Head of caudate nucleus (tissue), 42 donors: ENCODE measurements at regions of chr15 and their contacts with region 1.

Region 1: DNA sequence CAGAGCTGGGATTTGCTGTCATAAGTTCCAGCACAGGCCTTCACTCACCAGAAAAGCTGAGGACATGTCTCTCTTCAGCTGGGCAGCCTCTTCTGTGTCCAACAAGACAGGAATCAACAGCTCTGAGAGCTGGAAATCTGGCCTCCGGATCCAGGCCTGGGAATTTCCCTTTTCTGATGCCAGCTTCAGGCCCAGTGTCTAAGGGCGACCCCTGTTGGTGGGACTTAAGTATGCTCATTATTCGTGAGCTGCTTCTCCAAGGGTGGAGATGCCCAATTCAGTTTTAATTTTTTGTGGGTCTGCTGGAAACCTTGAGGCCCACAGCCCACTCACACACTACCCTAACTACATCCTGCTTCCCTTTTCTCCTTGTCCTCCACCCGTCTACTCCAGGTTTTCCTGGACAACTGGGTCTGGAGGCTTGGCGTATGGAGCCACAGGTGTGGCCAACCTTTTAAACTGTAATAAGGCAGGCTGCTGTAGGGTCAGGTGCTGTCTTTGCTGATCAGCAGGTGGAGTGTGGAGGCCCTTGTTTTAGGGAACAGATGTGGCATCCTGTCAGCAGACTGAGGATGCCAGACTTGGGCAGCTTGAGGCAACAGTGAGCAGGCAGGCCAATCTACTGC is 2.6 kb upstream of the CEMIP start:
- DNase-seq: peak; percentile 27 to 91 (median 78)

Region 2: GRCh38 chr15:80455668-80456442 is 320.7 kb before region 1 on chr15:
- intact Hi-C with region 1: loop called (anchors 5 kb)
- DNase-seq: peak; percentile 43 to 90 (median 71)

Region 3: GRCh38 chr15:80970018-80970658 is 193.6 kb after region 1 on chr15:
- intact Hi-C with region 1: loop called (anchors 10 kb)
- DNase-seq: peak; percentile 28 to 89 (median 75)